CD4-positive, alpha-beta memory T cell (primary cell): ENCODE measurements at regions of chr12 and their contacts with region 1.

Region 1: DNA sequence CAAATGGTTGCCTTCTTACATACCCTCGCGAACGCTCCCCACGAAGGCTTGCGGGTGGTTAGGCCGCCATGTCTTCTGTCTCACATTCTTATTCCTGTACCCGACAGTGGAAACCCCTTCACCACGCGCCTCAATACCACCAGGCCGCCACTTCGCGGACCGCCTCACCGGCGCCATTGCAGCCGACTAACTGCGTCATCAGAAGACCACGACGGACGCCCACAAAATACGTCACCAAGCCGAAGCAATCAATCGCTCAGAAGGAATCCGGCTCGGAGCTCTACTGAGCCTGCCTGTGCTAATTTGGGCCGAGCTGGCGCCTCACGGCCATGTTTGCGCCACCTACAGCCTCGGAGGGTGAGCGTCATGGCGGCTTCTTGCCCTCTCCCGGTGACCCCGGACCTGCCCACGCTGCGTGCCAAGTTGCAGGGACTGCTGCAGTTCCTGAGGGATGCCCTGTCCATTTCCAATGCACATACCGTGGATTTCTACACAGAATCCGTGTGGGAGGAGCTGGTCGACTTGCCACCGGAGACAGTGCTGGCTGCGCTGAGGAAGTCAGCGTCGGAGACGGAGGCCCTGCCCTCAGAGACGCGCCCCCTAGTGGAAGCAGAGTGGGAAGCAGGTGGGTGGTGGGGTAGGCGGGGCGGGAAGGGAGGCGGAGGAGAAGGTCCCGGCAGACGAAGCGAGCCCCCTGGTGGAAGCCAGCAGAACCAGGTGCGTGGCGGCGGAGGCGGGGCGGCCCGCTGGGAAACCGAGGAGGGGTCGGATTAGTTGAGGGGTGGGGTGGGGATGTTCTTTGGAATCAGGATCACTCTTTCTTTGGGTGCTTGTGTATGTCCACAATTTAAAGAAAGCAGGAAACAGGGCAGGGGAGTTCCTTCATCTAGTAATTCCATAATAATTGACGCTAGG is at the starts of genes CCDC59 and METTL25:
- DNase-seq: peak; percentile 97 to 98 (median 98)
- H3K4me3 ChIP-seq: peak within 1 kb of the TSS; percentile 94 to 96
- H3K4me3 Mint-ChIP-seq: peak within 1 kb of the TSS; percentile 96 to 100 (median 98)
- H3K27ac ChIP-seq: peak within 1 kb of the TSS; percentile 96
- H3K27ac Mint-ChIP-seq: peak within 1 kb of the TSS; percentile 98 to 100 (median 99)
- H3K4me1 ChIP-seq: peaks cover 43% of the 10 kb centered on the region
- H3K4me1 Mint-ChIP-seq: peaks cover 37 to 71% (median 54%) of the 10 kb centered on the region in 4 donors
- H3K27me3 ChIP-seq: no peaks in the 10 kb centered on the region
- H3K27me3 Mint-ChIP-seq: peaks cover 2% of the 10 kb centered on the region in 2 donors
- total RNA-seq, gene CCDC59: 58.1 to 60.4 TPM
- total RNA-seq, gene METTL25: 25.7 to 26.3 TPM

Region 2: DNA sequence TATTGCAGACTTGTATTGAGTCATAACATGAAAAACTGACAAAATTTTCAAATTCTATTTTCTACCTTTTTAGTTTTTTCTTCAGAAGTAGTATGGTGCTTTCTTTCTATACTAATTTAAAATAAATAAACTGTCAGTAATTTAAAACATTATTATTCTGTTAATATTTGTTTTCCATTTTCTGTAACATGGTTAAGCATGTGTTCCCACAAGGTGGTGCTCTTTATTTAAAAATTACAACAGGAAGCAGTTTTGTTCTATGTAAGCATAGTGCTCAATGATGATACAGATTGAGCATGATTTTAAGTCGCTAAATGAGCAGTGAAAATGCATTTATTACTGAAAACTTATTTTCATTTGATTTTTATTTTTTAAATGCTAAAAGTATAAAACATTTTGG is 714.0 kb before region 1 on chr12:
- CTCF ChIA-PET with region 1: interaction called, 6 read pairs
- POLR2A ChIA-PET with region 1: no interaction called
- intact Hi-C with region 1: loop called (anchors 1 kb)
- DNase-seq: peak in 4 of 5 donors; percentile 28 to 49 (median 32)
- H3K4me3 ChIP-seq: no peak overlapping the region
- H3K4me3 Mint-ChIP-seq: no peak overlapping the region
- H3K27ac ChIP-seq: no peak overlapping the region
- H3K27ac Mint-ChIP-seq: no peak overlapping the region
- H3K4me1 ChIP-seq: no peaks in the 10 kb centered on the region
- H3K4me1 Mint-ChIP-seq: no peaks in the 10 kb centered on the region
- H3K27me3 ChIP-seq: no peaks in the 10 kb centered on the region
- H3K27me3 Mint-ChIP-seq: no peaks in the 10 kb centered on the region

Region 3: DNA sequence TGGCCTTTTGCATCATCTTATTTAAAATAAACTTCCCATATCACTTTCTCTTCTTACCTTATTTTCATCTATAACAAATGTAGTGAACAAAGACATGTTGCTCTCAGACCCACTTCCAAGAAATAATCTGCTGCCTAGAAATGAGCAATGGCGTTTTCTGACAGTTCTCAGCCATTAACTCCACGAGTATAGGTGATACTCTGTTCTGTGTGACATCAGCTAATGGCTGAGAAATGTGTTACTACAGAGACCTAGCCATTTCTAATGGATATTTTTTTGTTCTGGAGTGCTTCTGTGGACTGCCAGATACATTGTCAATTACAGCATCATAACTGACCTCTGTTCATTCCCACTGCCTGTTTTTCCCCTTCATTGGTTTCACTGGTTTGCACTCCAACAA is 68.0 kb before region 1 on chr12:
- CTCF ChIA-PET with region 1: no interaction called
- POLR2A ChIA-PET with region 1: no interaction called
- intact Hi-C with region 1: no loop called
- DNase-seq: no peak
- H3K4me3 ChIP-seq: no peak overlapping the region
- H3K4me3 Mint-ChIP-seq: no peak overlapping the region
- H3K27ac ChIP-seq: no peak overlapping the region
- H3K27ac Mint-ChIP-seq: no peak overlapping the region
- H3K4me1 ChIP-seq: no peaks in the 10 kb centered on the region
- H3K4me1 Mint-ChIP-seq: no peaks in the 10 kb centered on the region
- H3K27me3 ChIP-seq: no peaks in the 10 kb centered on the region
- H3K27me3 Mint-ChIP-seq: peaks cover 0 to 4% of the 10 kb centered on the region in 2 donors